Aorta (tissue), 5 donors: ENCODE measurements at regions of chr6 and their contacts with region 1.

Region 1: GRCh38 chr6:35583893-35584688 is 71.4 kb upstream of the TULP1 start:
- DNase-seq: peak in 1 of 2 donors; percentile 72
- ATAC-seq: peak; percentile 75
- H3K4me3 ChIP-seq: no peak overlapping the region
- H3K27ac ChIP-seq: peak overlapping the region in 1 of 2 donors; percentile 71
- H3K4me1 ChIP-seq: peaks cover 4 to 9% of the 10 kb centered on the region in 2 donors
- H3K27me3 ChIP-seq: no peaks in the 10 kb centered on the region

Region 2: DNA sequence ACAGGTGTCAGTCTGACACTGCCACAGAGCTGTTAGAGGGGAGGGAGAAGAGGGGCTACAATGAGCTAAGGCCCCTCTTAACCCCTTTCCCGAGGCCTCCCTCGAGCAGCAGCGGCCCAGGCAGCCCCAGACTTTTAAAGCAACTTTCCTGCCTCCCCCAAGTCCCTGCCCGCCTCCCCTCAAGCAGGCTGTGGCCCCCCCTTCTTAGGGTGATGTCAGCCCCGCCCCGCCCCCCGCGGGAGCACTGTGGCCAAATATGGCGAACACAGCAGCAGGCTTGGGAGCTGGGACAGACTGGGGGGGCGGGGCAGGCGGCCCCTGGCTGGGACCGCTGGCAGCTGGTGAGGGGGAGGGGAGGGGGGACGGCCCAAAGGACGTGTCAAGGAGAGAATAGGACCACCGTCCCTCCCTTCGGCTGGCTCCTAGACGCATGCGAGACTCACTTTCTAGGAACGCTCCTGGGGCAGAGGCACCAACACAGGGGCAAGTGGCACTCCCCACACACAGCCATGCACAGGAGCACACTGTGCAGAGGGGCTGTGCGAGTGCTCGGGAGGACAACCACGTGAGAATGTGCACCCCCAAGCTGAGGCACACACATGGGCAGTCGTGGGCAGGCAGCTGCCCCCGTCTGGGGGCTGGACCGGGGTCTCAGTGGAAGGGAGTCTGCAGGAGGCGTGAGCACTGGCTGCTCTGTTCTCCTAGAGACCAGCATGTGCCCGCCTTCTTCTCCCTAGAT is 93.9 kb before region 1 on chr6:
- intact Hi-C with region 1: no loop called
- DNase-seq: peak; percentile 91 to 97
- ATAC-seq: peak; percentile 82
- H3K4me3 ChIP-seq: no peak overlapping the region
- H3K27ac ChIP-seq: peak overlapping the region; percentile 91 to 93
- H3K4me1 ChIP-seq: peaks cover 0 to 3% of the 10 kb centered on the region in 2 donors
- H3K27me3 ChIP-seq: no peaks in the 10 kb centered on the region

Region 3: GRCh38 chr6:35624341-35625070 is 40.4 kb after region 1 on chr6:
- intact Hi-C with region 1: loop called in 1 of 2 experiments (anchors 5 kb)
- DNase-seq: no peak
- ATAC-seq: no peak
- H3K4me3 ChIP-seq: no peak overlapping the region
- H3K27ac ChIP-seq: peak overlapping the region in 1 of 2 donors; percentile 28
- H3K4me1 ChIP-seq: no peaks in the 10 kb centered on the region
- H3K27me3 ChIP-seq: no peaks in the 10 kb centered on the region

Region 4: GRCh38 chr6:35651244-35651643 is 67.2 kb after region 1 on chr6:
- intact Hi-C with region 1: no loop called
- DNase-seq: no peak
- ATAC-seq: no peak
- H3K4me3 ChIP-seq: no peak overlapping the region
- H3K27ac ChIP-seq: no peak overlapping the region
- H3K4me1 ChIP-seq: no peaks in the 10 kb centered on the region
- H3K27me3 ChIP-seq: no peaks in the 10 kb centered on the region

Region 5: DNA sequence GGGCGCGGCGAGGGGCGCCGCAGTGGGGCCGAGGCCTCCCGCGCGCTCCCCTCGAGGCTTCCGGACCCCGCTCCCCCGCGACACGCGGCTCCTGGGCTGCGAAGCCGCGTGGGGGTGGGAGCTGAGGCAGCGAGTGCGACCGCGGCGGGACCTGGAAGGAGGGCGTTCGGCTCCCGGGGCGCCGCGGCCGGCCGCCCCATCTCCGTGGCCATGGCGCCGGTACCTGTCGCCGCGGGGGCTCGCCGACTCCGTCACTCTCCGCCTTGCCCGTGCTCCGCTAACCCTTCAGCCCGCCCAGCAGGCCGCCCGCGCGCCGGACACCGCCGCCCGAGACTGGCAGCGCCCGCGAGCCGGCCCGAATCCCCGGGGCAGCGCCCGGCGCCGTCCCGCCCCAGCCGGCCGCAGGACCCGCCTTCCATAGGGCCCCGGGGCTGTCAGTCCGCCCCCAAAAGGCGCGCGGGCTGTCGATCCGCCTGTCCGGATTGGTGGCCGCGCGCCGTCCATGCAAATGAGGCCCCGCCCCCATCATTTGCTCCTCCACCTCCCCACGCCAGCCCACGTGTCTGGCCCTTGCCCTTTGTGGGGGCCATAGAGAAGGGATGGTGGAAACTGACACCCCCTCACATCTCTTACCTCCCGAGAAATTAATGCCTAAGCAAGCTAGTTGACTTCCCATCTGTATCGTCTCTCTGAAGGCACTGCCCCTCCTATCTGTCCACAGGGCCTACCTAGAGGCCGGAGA is 104.7 kb after region 1 on chr6 and contains the start of gene FKBP5:
- intact Hi-C with region 1: loop called (anchors 5 to 10 kb)
- DNase-seq: peak; percentile 96 to 98
- ATAC-seq: peak; percentile 97
- H3K4me3 ChIP-seq: peak within 1 kb of the TSS; percentile 87 to 98
- H3K27ac ChIP-seq: peak within 1 kb of the TSS; percentile 15 to 86
- H3K4me1 ChIP-seq: no peaks in the 10 kb centered on the region
- H3K27me3 ChIP-seq: no peaks in the 10 kb centered on the region
- total RNA-seq, gene FKBP5: 25.1 to 96.1 TPM

Region 6: GRCh38 chr6:35737413-35738211 is 153.5 kb after region 1 on chr6:
- intact Hi-C with region 1: loop called (anchors 1 to 2 kb)
- DNase-seq: no peak
- ATAC-seq: peak; percentile 89
- H3K4me3 ChIP-seq: no peak overlapping the region
- H3K27ac ChIP-seq: no peak overlapping the region
- H3K4me1 ChIP-seq: peaks cover 0 to 5% of the 10 kb centered on the region in 2 donors
- H3K27me3 ChIP-seq: no peaks in the 10 kb centered on the region

Region 7: GRCh38 chr6:36280467-36280866 is 696.4 kb after region 1 on chr6:
- intact Hi-C with region 1: no loop called
- DNase-seq: no peak
- ATAC-seq: no peak
- H3K4me3 ChIP-seq: no peak overlapping the region
- H3K27ac ChIP-seq: no peak overlapping the region
- H3K4me1 ChIP-seq: no peaks in the 10 kb centered on the region
- H3K27me3 ChIP-seq: peaks cover 0 to 3% of the 10 kb centered on the region in 2 donors